Posterior vena cava (tissue), 2 donors: ENCODE measurements at regions of chr12 and their contacts with region 1.

Region 1: GRCh38 chr12:130452546-130452945 is 114.9 kb downstream of the PIWIL1 start:
- DNase-seq: no peak

Region 2: DNA sequence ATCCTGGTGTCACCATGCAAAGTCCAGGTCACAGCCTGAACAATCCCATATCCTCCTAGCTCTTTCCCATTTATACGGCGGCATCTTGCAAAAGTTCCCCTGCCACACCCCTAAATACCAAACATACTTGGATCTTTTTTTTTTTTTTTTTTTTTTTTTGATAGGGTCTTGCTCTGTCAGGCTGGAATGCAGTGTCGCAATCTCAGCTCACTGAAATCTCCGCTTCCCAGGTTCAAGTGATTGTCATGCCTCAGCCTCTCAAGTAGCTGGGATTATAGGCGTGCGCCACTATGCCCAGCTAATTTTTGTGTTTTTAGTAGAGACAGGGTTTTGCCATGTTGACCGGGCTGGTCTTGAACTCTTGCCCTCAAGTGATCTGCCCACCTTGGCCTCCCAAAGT is 1148.0 kb before region 1 on chr12:
- intact Hi-C with region 1: loop called in 1 of 2 experiments (anchors 5 kb)
- DNase-seq: no peak

Region 3: GRCh38 chr12:131092901-131093603 is 640.5 kb after region 1 on chr12:
- intact Hi-C with region 1: loop called in 1 of 2 experiments (anchors 5 kb)
- DNase-seq: peak; percentile 67